Breast epithelium (tissue), 4 donors: ENCODE measurements at regions of chr1 and their contacts with region 1.

Region 1: GRCh38 chr1:204989266-204990058 is 53.5 kb upstream of the CNTN2 start:
- DNase-seq: peak; percentile 70 to 74
- H3K4me3 ChIP-seq: no peak overlapping the region
- H3K27ac ChIP-seq: peak overlapping the region in 1 of 2 donors; percentile 3
- H3K4me1 ChIP-seq: no peaks in the 10 kb centered on the region
- H3K27me3 ChIP-seq: no peaks in the 10 kb centered on the region
- CTCF ChIP-seq: peak; percentile 41 to 95 (median 92)
- POLR2A ChIP-seq: no peak

Region 2: DNA sequence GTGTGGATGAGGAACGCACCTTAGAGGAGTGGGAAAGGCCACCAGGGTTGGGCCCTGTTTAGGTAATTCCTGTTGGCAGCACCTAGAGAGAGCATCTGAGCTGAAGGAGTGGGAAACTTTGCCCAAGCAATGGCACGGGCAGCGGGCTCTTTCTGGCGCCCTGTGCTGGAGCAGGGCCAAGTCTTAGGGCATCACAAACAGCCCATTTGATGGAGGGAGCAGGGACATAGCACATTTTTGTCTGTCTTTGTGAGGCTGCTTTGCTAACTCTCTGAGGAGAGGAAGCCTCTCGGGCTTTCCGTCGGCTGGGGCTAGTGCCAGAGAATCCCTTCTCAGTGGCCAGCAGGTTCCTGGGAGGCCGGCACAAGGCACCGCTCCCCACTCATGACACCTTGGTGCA is 31.0 kb after region 1 on chr1:
- intact Hi-C with region 1: no loop called
- DNase-seq: no peak
- H3K4me3 ChIP-seq: no peak overlapping the region
- H3K27ac ChIP-seq: no peak overlapping the region
- H3K4me1 ChIP-seq: no peaks in the 10 kb centered on the region
- H3K27me3 ChIP-seq: no peaks in the 10 kb centered on the region
- CTCF ChIP-seq: no peak
- POLR2A ChIP-seq: no peak

Region 3: GRCh38 chr1:205061665-205062069 is 72.2 kb after region 1 on chr1:
- intact Hi-C with region 1: loop called (anchors 5 kb)
- DNase-seq: peak; percentile 66 to 77
- H3K4me3 ChIP-seq: no peak overlapping the region
- H3K27ac ChIP-seq: no peak overlapping the region
- H3K4me1 ChIP-seq: no peaks in the 10 kb centered on the region
- H3K27me3 ChIP-seq: no peaks in the 10 kb centered on the region
- CTCF ChIP-seq: peak; percentile 68 to 92 (median 80)
- POLR2A ChIP-seq: no peak

Region 4: DNA sequence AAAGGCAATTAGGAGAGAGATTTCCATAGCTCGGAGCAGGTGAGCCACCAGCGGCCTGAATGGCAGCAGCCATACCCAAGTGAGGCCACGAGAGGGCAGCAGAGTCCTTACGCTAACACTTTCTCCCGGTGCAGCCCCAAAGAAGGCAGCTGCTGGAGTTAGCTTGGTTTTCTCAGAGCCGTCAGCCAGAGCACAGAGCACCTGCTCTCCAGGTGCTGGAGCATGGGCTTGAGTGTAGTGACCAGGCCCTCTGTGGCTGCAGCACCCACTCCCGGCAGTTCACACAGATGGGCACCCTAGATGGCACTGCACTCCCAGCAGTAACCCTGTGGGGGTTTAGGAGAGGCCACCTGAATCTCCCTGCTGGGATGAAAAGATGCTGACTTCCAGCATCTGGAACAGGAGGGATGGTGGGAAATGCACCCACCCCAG is 284.1 kb after region 1 on chr1:
- intact Hi-C with region 1: no loop called
- DNase-seq: peak; percentile 82 to 91
- H3K4me3 ChIP-seq: no peak overlapping the region
- H3K27ac ChIP-seq: no peak overlapping the region
- H3K4me1 ChIP-seq: no peaks in the 10 kb centered on the region
- H3K27me3 ChIP-seq: no peaks in the 10 kb centered on the region
- CTCF ChIP-seq: peak; percentile 91 to 98 (median 96)
- POLR2A ChIP-seq: no peak